A673 (cell line): ENCODE measurements at regions of chr5 and their contacts with region 1.

Region 1: GRCh38 chr5:141878711-141879425 is 658 bp upstream of the PCDH1 start:
- DNase-seq: peak; percentile 95
- H3K4me3 ChIP-seq: peak overlapping the region; percentile 35
- H3K27ac ChIP-seq: no peak overlapping the region
- H3K4me1 ChIP-seq: peaks cover 32% of the 10 kb centered on the region
- H3K27me3 ChIP-seq: peaks cover 79% of the 10 kb centered on the region
- CTCF ChIP-seq: peak; percentile 98

Region 2: DNA sequence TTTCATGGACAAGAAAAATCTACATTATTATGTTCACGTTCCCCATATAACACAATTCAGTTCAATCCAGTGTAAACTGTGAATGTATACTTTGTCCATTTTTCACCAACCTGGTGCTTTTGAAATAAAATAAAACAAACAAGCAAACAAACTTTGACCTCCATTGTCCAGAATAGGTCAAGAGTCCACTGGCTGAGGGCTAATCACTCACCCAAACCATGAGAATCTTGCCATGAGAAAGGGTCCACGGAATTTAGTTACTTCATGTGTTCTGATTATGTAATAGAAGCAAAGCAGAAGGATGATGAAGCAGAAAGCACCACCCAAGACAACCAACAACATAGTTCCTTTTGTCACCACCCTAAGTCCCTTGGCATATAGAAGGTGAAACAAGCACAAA is 288.7 kb before region 1 on chr5:
- CTCF ChIA-PET with region 1: interaction called, 4 read pairs
- POLR2A ChIA-PET with region 1: no interaction called
- intact Hi-C with region 1: loop called (anchors 5 kb)
- DNase-seq: no peak
- H3K4me3 ChIP-seq: no peak overlapping the region
- H3K27ac ChIP-seq: no peak overlapping the region
- H3K4me1 ChIP-seq: peaks cover 6% of the 10 kb centered on the region
- H3K27me3 ChIP-seq: no peaks in the 10 kb centered on the region
- CTCF ChIP-seq: no peak

Region 3: GRCh38 chr5:141664732-141665461 is 214.0 kb before region 1 on chr5:
- CTCF ChIA-PET with region 1: interaction called, 13 read pairs
- POLR2A ChIA-PET with region 1: no interaction called
- intact Hi-C with region 1: no loop called
- DNase-seq: peak; percentile 77
- H3K4me3 ChIP-seq: no peak overlapping the region
- H3K27ac ChIP-seq: no peak overlapping the region
- H3K4me1 ChIP-seq: peaks cover 3% of the 10 kb centered on the region
- H3K27me3 ChIP-seq: no peaks in the 10 kb centered on the region
- CTCF ChIP-seq: peak; percentile 92

Region 4: DNA sequence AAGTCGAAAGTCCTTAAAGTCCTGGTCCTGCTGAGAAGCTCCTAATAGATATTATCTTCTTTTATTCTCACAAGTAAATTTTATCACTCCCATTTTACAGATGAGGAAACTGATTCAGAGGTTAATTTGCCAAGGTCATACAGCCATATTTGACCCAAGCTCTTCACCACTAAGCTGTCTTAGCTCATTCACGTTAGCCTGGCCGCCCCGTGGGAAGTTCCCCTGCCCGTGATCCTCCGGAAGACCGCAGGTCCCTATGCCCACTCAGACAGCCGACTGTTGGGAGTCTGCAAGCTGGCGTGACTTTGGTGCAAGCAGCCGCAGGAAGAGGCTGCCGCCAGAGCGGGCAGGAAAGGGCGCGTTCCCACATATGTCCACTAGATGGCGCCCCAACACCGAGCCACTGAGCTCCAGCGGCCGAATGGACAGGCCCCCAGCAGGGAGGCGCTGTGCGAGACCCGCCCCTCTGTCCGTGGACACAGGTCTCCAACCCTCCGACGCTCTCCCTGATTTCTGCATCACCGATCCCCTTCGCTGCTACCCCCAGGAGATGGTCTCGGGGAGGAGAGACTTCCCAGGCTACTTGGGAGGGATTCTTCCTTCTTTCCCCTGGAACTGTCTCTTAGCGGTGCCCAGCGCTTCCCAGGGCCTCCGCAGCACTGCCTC is 186.9 kb before region 1 on chr5:
- CTCF ChIA-PET with region 1: interaction called, 42 read pairs
- POLR2A ChIA-PET with region 1: no interaction called
- intact Hi-C with region 1: loop called (anchors 1 kb)
- DNase-seq: peak; percentile 86
- H3K4me3 ChIP-seq: peak overlapping the region; percentile 44
- H3K27ac ChIP-seq: no peak overlapping the region
- H3K4me1 ChIP-seq: peaks cover 28% of the 10 kb centered on the region
- H3K27me3 ChIP-seq: no peaks in the 10 kb centered on the region
- CTCF ChIP-seq: peak; percentile 96

Region 5: GRCh38 chr5:141701360-141702119 is 177.3 kb before region 1 on chr5:
- CTCF ChIA-PET with region 1: interaction called, 14 read pairs
- POLR2A ChIA-PET with region 1: no interaction called
- intact Hi-C with region 1: loop called (anchors 1 kb)
- DNase-seq: no peak
- H3K4me3 ChIP-seq: peak overlapping the region; percentile 45
- H3K27ac ChIP-seq: no peak overlapping the region
- H3K4me1 ChIP-seq: peaks cover 12% of the 10 kb centered on the region
- H3K27me3 ChIP-seq: peaks cover 6% of the 10 kb centered on the region
- CTCF ChIP-seq: no peak

Region 6: GRCh38 chr5:141757402-141757801 is 121.5 kb before region 1 on chr5:
- CTCF ChIA-PET with region 1: interaction called, 20 read pairs
- POLR2A ChIA-PET with region 1: no interaction called
- intact Hi-C with region 1: no loop called
- DNase-seq: no peak
- H3K4me3 ChIP-seq: no peak overlapping the region
- H3K27ac ChIP-seq: no peak overlapping the region
- H3K4me1 ChIP-seq: no peaks in the 10 kb centered on the region
- H3K27me3 ChIP-seq: peaks cover 44% of the 10 kb centered on the region
- CTCF ChIP-seq: peak; percentile 44

Region 7: DNA sequence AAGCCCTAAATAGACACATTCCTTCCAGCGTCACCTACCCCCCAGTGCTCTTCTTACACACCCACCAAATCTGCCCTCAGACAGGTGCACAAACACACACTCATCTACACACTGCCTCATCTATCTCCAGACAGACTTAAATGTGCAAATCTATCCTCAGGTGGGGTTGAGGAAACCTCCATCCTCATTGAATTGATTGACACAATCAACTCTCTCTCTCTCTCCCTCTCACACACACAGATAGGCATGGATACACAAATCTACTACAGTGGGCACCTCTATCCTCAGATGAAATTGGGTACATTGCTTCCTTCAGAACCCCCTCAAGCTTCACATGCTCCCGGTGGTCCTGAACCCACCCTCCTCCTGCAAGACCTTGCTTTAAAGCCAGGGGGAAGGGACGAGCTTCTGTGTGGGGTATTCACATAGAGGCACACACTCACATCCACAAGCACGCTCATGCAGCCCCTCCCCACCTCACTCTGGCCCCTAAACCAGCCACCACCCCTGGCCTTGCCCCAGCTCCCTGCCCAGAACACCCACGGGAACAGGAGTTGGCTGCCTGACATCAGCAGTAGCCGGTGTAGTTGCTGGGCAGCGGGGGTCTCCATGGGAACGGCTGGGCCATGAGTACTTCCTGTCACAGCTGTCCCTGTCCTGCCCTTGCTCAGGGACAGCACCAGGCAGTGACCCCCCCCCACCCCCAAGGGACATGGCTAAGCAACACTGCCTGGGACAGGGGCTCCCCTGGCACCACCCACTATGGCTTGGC is 23.4 kb before region 1 on chr5:
- CTCF ChIA-PET with region 1: no interaction called
- POLR2A ChIA-PET with region 1: no interaction called
- intact Hi-C with region 1: no loop called
- DNase-seq: no peak
- H3K4me3 ChIP-seq: no peak overlapping the region
- H3K27ac ChIP-seq: no peak overlapping the region
- H3K4me1 ChIP-seq: peaks cover 6% of the 10 kb centered on the region
- H3K27me3 ChIP-seq: peaks cover 4% of the 10 kb centered on the region
- CTCF ChIP-seq: no peak

Region 8: DNA sequence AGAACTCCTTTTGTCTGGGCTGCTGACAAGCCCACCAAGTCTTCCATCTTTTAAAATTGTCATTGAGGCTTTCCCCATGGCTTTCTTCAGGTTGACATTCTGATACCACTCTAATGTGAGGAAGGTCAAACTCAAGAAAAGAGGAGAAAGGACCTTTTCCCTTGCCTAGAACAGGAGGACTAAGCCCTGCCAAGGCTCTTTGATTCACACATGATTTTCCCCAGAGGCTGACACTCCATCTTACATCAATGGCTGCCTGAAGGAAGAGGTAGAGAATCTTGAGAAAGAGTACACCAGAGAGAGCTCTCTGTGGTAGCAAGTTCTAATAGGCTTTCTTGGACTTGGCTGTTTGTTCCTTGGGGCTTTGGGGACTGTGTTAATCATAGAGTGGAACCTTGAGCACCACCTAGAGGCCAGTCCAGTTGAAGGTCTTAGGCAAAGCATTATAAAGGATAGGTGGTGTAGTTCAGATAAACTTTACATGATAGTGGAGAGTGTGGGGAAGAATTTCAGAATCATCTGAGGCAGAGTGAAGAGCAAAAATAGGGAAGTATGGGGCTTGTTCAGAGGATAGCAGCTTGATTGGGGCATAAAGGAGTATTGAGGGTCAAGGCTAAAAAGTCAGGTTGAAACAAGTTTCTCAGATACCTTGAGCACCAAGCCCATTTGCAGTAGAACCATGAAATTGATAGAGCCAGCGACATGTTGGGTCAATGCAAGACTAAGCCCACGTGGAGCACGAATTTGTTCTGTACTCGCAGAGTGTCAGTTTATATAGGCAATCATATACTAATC is 266.4 kb after region 1 on chr5:
- CTCF ChIA-PET with region 1: no interaction called
- POLR2A ChIA-PET with region 1: no interaction called
- intact Hi-C with region 1: loop called (anchors 10 kb)
- DNase-seq: peak; percentile 83
- H3K4me3 ChIP-seq: no peak overlapping the region
- H3K27ac ChIP-seq: no peak overlapping the region
- H3K4me1 ChIP-seq: no peaks in the 10 kb centered on the region
- H3K27me3 ChIP-seq: no peaks in the 10 kb centered on the region
- CTCF ChIP-seq: peak; percentile 85